ENCODE measurements at regions of chr17 and their contacts with region 1.

Region 1: GRCh38 chr17:40038882-40039513 is 15.2 kb downstream of the MED24 start:
- DNase-seq: peak; percentile 47 to 68 (median 64)
- H3K4me3 ChIP-seq: no peak overlapping the region
- H3K27ac ChIP-seq: no peak overlapping the region
- H3K4me1 ChIP-seq: peaks cover 0 to 5% (median 2%) of the 10 kb centered on the region in 4 experiments
- H3K27me3 ChIP-seq: no peaks in the 10 kb centered on the region

Region 2: DNA sequence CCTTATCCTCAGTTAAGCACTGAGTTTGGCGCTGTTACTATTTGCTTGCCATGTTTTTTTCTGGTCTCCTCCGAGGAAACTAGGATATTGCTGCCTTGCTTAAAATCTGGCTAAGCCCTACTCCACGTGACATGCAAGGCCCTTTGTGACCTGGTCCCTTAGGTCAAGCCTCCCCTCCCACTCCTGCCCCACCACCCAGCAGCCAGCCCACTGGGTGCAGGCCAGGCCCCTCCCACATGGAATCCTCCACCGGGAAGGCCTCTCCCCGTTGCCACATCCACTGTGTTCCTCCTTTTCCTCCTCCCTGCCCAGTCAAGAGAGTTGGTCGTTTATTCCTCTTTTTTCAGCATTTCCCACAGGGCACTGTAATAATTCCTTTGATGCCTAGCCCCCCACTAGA is 42.2 kb before region 1 on chr17:
- CTCF ChIA-PET with region 1: no interaction called
- POLR2A ChIA-PET with region 1: no interaction called
- DNase-seq: no peak
- H3K4me3 ChIP-seq: no peak overlapping the region
- H3K27ac ChIP-seq: no peak overlapping the region
- H3K4me1 ChIP-seq: no peaks in the 10 kb centered on the region
- H3K27me3 ChIP-seq: no peaks in the 10 kb centered on the region

Region 3: DNA sequence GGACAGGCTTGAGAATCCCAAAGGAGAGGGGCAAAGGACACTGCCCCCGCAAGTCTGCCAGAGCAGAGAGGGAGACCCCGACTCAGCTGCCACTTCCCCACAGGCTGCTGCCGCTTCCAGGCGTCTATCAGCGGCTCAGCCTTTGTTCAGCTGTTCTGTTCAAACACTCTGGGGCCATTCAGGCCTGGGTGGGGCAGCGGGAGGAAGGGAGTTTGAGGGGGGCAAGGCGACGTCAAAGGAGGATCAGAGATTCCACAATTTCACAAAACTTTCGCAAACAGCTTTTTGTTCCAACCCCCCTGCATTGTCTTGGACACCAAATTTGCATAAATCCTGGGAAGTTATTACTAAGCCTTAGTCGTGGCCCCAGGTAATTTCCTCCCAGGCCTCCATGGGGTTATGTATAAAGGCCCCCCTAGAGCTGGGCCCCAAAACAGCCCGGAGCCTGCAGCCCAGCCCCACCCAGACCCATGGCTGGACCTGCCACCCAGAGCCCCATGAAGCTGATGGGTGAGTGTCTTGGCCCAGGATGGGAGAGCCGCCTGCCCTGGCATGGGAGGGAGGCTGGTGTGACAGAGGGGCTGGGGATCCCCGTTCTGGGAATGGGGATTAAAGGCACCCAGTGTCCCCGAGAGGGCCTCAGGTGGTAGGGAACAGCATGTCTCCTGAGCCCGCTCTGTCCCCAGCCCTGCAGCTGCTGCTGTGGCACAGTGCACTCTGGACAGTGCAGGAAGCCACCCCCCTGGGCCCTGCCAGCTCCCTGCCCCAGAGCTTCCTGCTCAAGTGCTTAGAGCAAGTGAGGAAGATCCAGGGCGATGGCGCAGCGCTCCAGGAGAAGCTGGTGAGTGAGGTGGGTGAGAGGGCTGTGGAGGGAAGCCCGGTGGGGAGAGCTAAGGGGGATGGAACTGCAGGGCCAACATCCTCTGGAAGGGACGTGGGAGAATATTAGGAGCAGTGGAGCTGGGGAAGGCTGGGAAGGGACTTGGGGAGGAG is 23.7 kb before region 1 on chr17 and contains the start of gene CSF3:
- CTCF ChIA-PET with region 1: interaction called, 12 read pairs
- POLR2A ChIA-PET with region 1: no interaction called
- DNase-seq: peak in 2 of 3 donors; percentile 23 to 26
- H3K4me3 ChIP-seq: peak within 1 kb of the TSS in 1 of 7 experiments; percentile 0
- H3K27ac ChIP-seq: no peak within 1 kb of the TSS
- H3K4me1 ChIP-seq: peaks cover 0 to 13% (median 9%) of the 10 kb centered on the region in 4 experiments
- H3K27me3 ChIP-seq: no peaks in the 10 kb centered on the region

Region 4: GRCh38 chr17:40026816-40027613 is 12.0 kb before region 1 on chr17:
- CTCF ChIA-PET with region 1: interaction called, 56 read pairs
- POLR2A ChIA-PET with region 1: no interaction called
- DNase-seq: peak; percentile 67 to 83 (median 75)
- H3K4me3 ChIP-seq: no peak overlapping the region
- H3K27ac ChIP-seq: no peak overlapping the region
- H3K4me1 ChIP-seq: peaks cover 0 to 6% (median 0%) of the 10 kb centered on the region in 4 experiments
- H3K27me3 ChIP-seq: no peaks in the 10 kb centered on the region

Measured in common myeloid progenitor, CD34-positive (primary cell).